ENCODE measurements at regions of chr5 and their contacts with region 1.

Region 1: DNA sequence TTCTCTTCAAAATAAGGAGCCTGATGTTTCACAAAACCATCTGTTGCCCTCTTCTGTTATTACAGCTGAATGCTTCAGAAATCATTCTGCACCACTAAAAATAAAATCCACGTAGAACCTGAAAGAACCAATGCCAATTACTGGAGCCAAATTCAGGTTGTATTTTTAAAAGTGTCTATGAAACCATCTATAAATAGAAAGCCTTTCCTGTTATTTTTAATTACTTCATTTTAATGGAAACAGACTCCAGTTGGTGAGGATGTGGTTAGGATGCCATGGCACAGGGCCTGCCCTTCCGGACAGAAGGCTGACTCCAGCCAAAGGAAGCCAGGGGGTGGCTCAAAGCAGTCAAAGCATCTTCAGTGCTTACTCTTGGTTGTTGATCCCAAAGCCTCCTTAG is 119.8 kb downstream of the TENT4A start:
- DNase-seq: peak in 1 of 2 donors; percentile 70
- H3K4me3 ChIP-seq: no peak overlapping the region
- H3K27ac ChIP-seq: peak overlapping the region; percentile 56 to 64
- H3K4me1 ChIP-seq: peaks cover 0 to 7% of the 10 kb centered on the region in 2 donors
- H3K27me3 ChIP-seq: no peaks in the 10 kb centered on the region
- CTCF ChIP-seq: no peak

Region 2: GRCh38 chr5:6765612-6766525 is 67.1 kb before region 1 on chr5:
- intact Hi-C with region 1: loop called (anchors 2 kb)
- DNase-seq: peak in 1 of 2 donors; percentile 86
- H3K4me3 ChIP-seq: peak overlapping the region in 1 of 2 donors; percentile 41
- H3K27ac ChIP-seq: peak overlapping the region; percentile 84 to 87
- H3K4me1 ChIP-seq: peaks cover 4 to 13% of the 10 kb centered on the region in 2 donors
- H3K27me3 ChIP-seq: no peaks in the 10 kb centered on the region
- CTCF ChIP-seq: peak; percentile 76 to 92 (median 80)

Measured in ascending aorta (tissue), 2 donors.